Activated CD8-positive, alpha-beta T cell treated with anti-CD3 and anti-CD28 coated beads for 36 hours (primary cell): ENCODE measurements at regions of chr1 and their contacts with region 1.

Region 1: GRCh38 chr1:39196244-39197215 is 8.0 kb upstream of the MACF1 start:
- DNase-seq: peak; percentile 84
- ATAC-seq: peak; percentile 48
- H3K4me3 Mint-ChIP-seq: peak overlapping the region; percentile 41
- H3K27ac Mint-ChIP-seq: peak overlapping the region; percentile 89
- H3K4me1 Mint-ChIP-seq: peaks cover 72% of the 10 kb centered on the region
- H3K27me3 Mint-ChIP-seq: no peaks in the 10 kb centered on the region
- CTCF ChIP-seq: no peak

Region 2: DNA sequence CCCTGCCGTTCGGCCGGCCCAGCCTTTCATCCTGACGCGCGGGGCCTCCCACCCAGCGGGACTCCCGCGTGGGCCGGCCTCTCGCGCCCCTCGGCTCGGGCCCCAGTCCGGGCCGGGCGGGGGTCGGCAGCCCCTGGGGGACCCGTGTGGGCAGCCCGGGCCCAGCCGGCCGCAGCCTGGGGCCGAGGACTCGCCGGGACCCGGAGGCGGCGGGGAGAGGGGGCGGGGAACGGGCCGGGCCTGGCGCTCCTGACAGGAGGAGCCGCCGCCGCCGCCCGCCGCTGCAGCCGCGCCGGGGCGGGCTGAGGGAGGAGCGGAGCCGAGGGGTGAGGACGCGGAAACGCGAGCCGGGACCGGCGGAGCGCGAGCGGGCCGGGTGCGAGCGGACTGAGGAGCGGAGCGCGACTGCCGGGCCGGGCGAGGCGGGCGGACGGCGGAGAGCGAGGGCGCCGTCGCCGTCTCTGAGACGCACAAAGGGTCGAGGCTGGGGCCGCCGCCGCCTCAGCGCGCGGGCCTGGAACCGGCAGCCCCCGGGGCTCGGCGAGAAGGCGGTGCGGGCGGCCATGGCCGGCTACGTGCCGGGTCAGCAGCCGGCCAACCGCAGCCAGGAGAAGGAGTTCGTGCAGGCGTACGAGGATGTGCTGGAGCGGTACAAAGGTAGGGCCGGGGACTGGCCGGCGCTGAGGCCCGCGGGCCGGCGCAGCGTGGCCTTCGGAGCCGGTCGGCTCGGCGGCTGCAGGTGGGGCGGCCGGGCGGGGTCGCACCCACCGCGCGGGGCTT is 91.3 kb before region 1 on chr1:
- CTCF ChIA-PET with region 1: interaction called, 156 read pairs
- POLR2A ChIA-PET with region 1: interaction called, 5 read pairs
- intact Hi-C with region 1: loop called (anchors 5 kb)
- DNase-seq: peak; percentile 56
- ATAC-seq: peak; percentile 68
- H3K4me3 Mint-ChIP-seq: no peak overlapping the region
- H3K27ac Mint-ChIP-seq: no peak overlapping the region
- H3K4me1 Mint-ChIP-seq: peaks cover 29% of the 10 kb centered on the region
- H3K27me3 Mint-ChIP-seq: peaks cover 7% of the 10 kb centered on the region
- CTCF ChIP-seq: no peak

Region 3: DNA sequence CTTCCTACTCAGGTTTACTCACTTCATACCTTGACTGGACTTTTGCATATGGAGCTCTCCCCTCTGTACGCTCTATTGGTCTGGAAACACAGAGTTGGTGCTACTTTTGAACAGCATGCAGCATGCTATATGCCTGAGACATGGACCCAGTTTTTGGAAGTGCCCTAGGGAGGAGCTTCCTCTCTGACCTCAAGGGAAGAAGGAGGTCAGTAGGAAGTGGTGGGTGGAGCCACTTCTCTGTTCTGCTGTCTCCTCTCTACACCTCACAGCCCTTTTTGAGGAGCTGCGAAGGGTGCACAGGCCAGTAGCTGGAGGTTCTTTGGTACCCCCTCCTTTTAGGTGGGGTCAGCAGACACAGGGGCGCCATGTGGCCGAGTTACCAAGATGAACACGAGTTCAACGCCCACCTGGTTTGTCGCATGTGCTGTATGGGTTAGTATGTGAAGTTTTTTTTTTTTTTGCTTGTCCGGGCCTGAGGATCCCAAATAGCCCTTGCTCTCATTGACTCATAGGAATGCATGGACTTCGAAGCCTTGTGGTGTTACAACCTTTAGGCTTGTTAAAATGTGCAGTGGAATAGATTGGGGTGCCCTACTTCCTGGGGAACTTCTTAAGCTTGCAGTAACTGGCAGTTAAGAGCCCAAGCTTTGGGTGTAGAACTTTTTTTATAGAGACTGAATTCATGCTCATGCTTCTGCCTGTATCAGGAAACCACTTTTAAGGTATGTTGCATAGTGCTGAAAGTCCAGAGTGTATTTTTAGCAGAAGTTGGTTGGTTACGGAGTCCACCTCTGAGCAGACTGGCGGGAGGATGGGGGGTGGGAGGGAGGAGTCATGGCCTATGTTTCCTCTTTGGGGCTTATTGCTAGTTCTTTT is 18.7 kb after region 1 on chr1:
- CTCF ChIA-PET with region 1: interaction called, 150 read pairs
- POLR2A ChIA-PET with region 1: interaction called, 32 read pairs
- intact Hi-C with region 1: no loop called
- DNase-seq: peak; percentile 65
- ATAC-seq: peak; percentile 75
- H3K4me3 Mint-ChIP-seq: peak overlapping the region; percentile 79
- H3K27ac Mint-ChIP-seq: peak overlapping the region; percentile 90
- H3K4me1 Mint-ChIP-seq: peaks cover 45% of the 10 kb centered on the region
- H3K27me3 Mint-ChIP-seq: no peaks in the 10 kb centered on the region
- CTCF ChIP-seq: no peak

Region 4: DNA sequence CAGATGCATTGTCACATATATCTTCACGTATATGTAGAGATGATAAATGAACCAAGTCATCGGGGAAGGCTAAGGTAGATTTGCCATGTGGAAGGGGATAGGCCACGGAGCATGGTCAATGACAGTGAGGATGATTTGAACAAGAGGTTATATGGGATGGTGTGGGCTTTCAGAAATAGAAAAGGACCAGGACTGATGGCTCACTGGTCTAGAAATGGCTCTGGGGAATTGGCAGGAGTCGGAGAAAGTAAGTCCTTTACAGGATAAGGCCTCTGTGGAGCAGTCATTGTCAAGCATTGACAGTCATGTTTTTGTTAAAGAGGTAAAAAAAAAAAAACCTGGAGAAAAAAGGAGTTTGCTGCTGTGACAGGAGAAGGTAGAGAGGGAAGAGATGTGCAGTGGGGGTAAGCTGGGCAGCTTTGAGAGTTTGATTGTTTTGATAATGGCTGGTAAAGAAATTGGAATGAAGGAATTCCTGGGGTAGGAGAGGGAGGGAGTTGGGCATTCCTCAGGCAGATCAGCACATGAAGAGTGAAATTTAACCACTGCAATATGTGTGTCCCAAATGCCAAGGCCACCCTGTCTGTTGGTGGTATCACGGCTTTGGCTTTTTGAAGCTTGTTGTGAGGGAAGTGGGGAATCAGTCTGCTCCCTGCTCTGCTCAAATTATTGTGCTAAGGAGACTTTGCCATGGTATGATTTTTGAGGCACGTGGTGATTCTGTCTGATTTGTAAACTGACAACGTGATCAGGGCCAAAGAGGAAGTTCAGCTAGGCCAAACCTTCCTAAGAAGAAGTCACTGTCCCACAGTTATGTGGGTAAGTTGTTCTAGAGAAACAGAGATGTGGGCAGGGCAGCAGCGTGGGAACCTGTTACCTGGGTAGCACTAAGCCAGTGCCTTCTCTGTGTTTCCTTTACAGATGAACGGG is 34.0 kb after region 1 on chr1:
- CTCF ChIA-PET with region 1: interaction called, 15 read pairs
- POLR2A ChIA-PET with region 1: no interaction called
- intact Hi-C with region 1: no loop called
- DNase-seq: peak; percentile 32
- ATAC-seq: peak; percentile 72
- H3K4me3 Mint-ChIP-seq: peak overlapping the region; percentile 7
- H3K27ac Mint-ChIP-seq: peak overlapping the region; percentile 73
- H3K4me1 Mint-ChIP-seq: peaks cover 56% of the 10 kb centered on the region
- H3K27me3 Mint-ChIP-seq: no peaks in the 10 kb centered on the region
- CTCF ChIP-seq: no peak

Region 5: GRCh38 chr1:39250460-39251240 is 54.1 kb after region 1 on chr1:
- CTCF ChIA-PET with region 1: interaction called, 371 read pairs
- POLR2A ChIA-PET with region 1: interaction called, 5 read pairs
- intact Hi-C with region 1: no loop called
- DNase-seq: no peak
- ATAC-seq: no peak
- H3K4me3 Mint-ChIP-seq: no peak overlapping the region
- H3K27ac Mint-ChIP-seq: peak overlapping the region; percentile 27
- H3K4me1 Mint-ChIP-seq: peaks cover 37% of the 10 kb centered on the region
- H3K27me3 Mint-ChIP-seq: no peaks in the 10 kb centered on the region
- CTCF ChIP-seq: no peak

Region 6: GRCh38 chr1:39268112-39268581 is 71.6 kb after region 1 on chr1:
- CTCF ChIA-PET with region 1: interaction called, 371 read pairs
- POLR2A ChIA-PET with region 1: interaction called, 3 read pairs
- intact Hi-C with region 1: no loop called
- DNase-seq: peak; percentile 24
- ATAC-seq: peak; percentile 53
- H3K4me3 Mint-ChIP-seq: peak overlapping the region; percentile 53
- H3K27ac Mint-ChIP-seq: peak overlapping the region; percentile 53
- H3K4me1 Mint-ChIP-seq: peaks cover 82% of the 10 kb centered on the region
- H3K27me3 Mint-ChIP-seq: no peaks in the 10 kb centered on the region
- CTCF ChIP-seq: no peak